ENCODE measurements at regions of chr17 and their contacts with region 1.

Region 1: GRCh38 chr17:76540381-76541300 is 797 bp downstream of the PRCD start:
- DNase-seq: peak; percentile 93
- H3K4me3 ChIP-seq: peak overlapping the region; percentile 37 to 41
- H3K27ac ChIP-seq: peak overlapping the region in 1 of 2 experiments; percentile 99; a peak in 2 of 4 replicates
- H3K4me1 ChIP-seq: peaks cover 10 to 88% of the 10 kb centered on the region in 2 experiments; a peak in 3 of 4 replicates
- H3K27me3 ChIP-seq: peaks cover 42% of the 10 kb centered on the region
- CTCF ChIP-seq: peak; percentile 33; the same call in 1 of the 2 replicates
- EP300 ChIP-seq: peak in 1 of 2 experiments; percentile 81; a peak in 2 of 4 replicates
- RAD21 ChIP-seq: peak; percentile 13; the same call in 1 of the 2 replicates

Region 2: GRCh38 chr17:76506408-76507349 is 34.0 kb before region 1 on chr17:
- CTCF ChIA-PET with region 1: interaction called, 679 read pairs
- POLR2A ChIA-PET with region 1: interaction called, 3 read pairs
- DNase-seq: peak; percentile 95
- H3K4me3 ChIP-seq: no peak overlapping the region; a peak in 1 of 4 replicates
- H3K27ac ChIP-seq: no peak overlapping the region
- H3K4me1 ChIP-seq: peaks cover 0 to 14% of the 10 kb centered on the region in 2 experiments; a peak in 1 of 4 replicates
- H3K27me3 ChIP-seq: peaks cover 9% of the 10 kb centered on the region
- CTCF ChIP-seq: peak; percentile 96
- EP300 ChIP-seq: no peak
- RAD21 ChIP-seq: peak; percentile 99

Region 3: DNA sequence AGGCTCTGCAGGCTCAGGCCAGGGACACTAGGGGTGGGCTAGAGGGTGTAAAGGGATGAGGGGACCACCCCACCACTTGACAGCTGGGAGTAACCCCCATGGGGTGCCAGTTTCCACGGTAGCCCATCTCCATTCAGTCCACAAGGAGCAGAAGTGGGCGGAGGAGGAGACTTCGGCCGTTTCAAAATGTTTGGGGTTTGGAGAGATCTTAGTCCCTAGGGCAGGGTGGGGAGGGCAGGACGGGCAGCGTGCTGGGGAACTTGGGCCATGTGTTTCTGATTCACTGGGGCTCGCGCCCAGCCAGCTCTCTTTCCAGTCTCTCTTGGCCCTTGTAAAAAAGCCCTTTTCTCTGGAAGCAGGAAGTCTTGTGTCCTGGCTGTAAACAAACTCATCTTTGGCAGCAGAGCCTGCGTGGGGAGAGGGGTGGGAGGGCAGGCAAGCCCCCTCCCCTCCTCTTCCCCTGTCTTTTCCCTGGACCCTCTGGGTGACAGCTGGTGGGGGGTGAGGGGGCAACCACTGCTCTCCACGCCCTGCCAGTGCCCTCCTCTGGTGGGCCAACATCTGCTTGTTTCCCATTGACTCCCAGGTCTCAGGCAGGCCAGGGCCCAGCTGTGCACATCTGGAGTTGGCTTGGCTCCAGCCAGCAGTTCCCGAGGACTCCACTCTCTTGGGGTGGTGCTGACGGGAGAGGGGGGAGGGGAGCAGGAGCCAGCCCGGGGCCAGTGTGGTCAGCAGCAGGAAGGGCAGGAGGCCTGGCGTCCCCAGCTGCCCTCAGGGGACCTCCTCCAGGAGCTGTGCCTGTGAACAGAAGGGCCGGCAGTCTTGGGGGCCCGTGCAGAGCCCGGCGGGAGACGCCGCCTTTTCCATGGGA is 11.2 kb before region 1 on chr17:
- CTCF ChIA-PET with region 1: interaction called, 679 read pairs
- POLR2A ChIA-PET with region 1: interaction called, 245 read pairs
- DNase-seq: peak; percentile 92
- H3K4me3 ChIP-seq: no peak overlapping the region
- H3K27ac ChIP-seq: peak overlapping the region; percentile 49 to 89; a peak in 3 of 4 replicates
- H3K4me1 ChIP-seq: peaks cover 13 to 66% of the 10 kb centered on the region in 2 experiments; a peak in 3 of 4 replicates
- H3K27me3 ChIP-seq: no peaks in the 10 kb centered on the region
- CTCF ChIP-seq: no peak
- EP300 ChIP-seq: peak in 1 of 2 experiments; percentile 86; a peak in 2 of 4 replicates
- RAD21 ChIP-seq: peak; percentile 13; the same call in 1 of the 2 replicates

Region 4: DNA sequence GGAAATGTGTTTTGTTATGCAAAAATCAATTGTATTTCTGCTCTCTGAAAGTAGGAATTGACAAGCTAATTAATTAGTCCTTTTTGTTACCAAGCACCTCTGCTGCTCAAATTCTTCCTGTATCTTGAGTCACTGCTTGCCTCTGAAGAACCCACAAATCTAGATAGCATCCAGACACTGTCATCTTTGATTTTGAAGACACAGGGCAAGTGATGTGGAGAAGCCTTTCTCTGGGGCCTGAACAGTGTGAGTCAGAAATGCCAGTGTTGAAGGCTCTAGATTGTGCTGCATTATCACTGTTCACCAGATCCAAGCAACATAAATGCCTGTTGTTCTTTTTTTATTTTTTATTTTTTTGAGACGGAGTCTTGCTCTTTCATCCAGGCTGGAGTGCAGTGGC is 113.8 kb after region 1 on chr17:
- CTCF ChIA-PET with region 1: no interaction called
- POLR2A ChIA-PET with region 1: no interaction called
- DNase-seq: no peak
- H3K4me3 ChIP-seq: no peak overlapping the region
- H3K27ac ChIP-seq: no peak overlapping the region
- H3K4me1 ChIP-seq: peaks cover 0 to 1% of the 10 kb centered on the region in 2 experiments; a peak in 1 of 4 replicates
- H3K27me3 ChIP-seq: no peaks in the 10 kb centered on the region
- CTCF ChIP-seq: no peak
- EP300 ChIP-seq: no peak
- RAD21 ChIP-seq: no peak